H1 (cell line): ENCODE measurements at regions of chr14 and their contacts with region 1.

Region 1: DNA sequence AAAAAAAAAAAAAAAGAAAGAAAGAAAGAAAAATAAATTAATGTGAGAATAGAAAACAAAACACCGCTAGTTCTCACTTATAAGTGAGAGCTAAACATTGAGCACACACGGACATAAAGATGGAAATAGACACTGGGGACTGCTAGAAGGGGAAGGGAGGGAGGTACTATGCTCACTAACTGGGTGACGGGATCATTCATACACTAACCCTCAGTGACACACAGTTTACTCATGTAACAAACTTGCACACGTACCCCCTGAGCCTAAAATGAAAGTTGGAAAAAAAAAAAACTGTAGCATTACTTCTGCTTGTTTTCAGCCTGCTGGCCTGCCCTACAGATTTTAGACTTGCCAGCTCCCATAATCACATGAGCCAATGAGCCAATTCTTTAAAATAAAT is 10.5 kb upstream of the PRMT5 start:
- DNase-seq: no peak
- H3K4me3 ChIP-seq: no peak overlapping the region
- H3K27ac ChIP-seq: no peak overlapping the region
- H3K4me1 ChIP-seq: no peaks in the 10 kb centered on the region
- H3K27me3 ChIP-seq: no peaks in the 10 kb centered on the region
- CTCF ChIP-seq: no peak
- EP300 ChIP-seq: no peak
- POLR2A ChIP-seq: no peak
- RAD21 ChIP-seq: no peak

Region 2: DNA sequence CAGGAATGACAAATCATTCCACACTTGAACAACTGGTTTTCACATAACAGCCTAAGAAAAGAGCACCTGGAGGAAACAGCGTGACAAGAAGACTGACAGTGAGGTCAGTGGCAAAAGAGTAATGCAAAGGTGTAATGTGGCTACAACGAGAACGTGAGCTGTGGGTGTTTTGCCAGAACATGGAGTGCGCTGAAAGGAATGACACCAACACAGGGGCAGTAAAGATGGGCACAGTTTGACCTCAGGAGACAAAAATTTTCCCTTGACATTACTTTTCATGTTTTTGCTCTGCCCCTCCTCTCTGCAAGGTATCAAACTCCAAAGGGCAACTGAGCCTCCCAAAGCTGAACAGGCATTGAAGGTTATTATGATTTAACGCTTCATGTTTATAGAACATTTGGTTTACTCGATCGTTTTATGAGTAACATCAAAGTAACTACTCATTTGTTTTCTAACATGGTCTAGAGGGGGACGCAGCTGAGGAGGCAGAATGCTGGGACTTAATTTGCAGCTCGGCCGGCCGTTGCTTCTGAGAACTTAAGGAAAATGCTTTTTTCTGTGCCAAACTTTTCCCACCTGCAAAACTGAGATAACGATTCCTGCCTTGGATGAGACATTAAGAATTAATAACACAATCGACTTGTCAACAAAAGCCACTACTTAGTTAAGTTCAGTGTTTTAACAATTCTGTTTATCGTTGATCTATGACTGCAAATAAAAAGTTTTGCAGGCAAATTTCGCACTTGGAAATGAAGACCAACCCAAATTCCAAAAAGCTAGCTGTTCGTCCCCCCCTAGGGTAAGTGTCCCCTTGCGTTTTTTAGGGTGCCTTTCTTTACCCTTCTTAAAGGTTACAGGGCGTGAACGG is 16.3 kb after region 1 on chr14:
- CTCF ChIA-PET with region 1: interaction called, 43 read pairs
- POLR2A ChIA-PET with region 1: interaction called, 26 read pairs
- DNase-seq: no peak
- H3K4me3 ChIP-seq: peak overlapping the region; percentile 71 to 88 (median 84)
- H3K27ac ChIP-seq: 0 out of 2 replicates have a peak overlapping the region, but pooled peaks have one; percentile 89
- H3K4me1 ChIP-seq: peaks cover 2 to 4% (median 2%) of the 10 kb centered on the region in 4 experiments; a peak in 5 of 7 replicates
- H3K27me3 ChIP-seq: no peaks in the 10 kb centered on the region
- CTCF ChIP-seq: no peak
- EP300 ChIP-seq: no peak
- POLR2A ChIP-seq: no peak
- RAD21 ChIP-seq: no peak

Region 3: GRCh38 chr14:22966783-22967269 is 27.1 kb after region 1 on chr14:
- CTCF ChIA-PET with region 1: interaction called, 15 read pairs
- POLR2A ChIA-PET with region 1: interaction called, 3 read pairs
- DNase-seq: no peak
- H3K4me3 ChIP-seq: no peak overlapping the region
- H3K27ac ChIP-seq: no peak overlapping the region
- H3K4me1 ChIP-seq: no peaks in the 10 kb centered on the region
- H3K27me3 ChIP-seq: no peaks in the 10 kb centered on the region
- CTCF ChIP-seq: no peak
- EP300 ChIP-seq: no peak
- POLR2A ChIP-seq: no peak; a peak in 1 of 3 replicates
- RAD21 ChIP-seq: no peak

Region 4: DNA sequence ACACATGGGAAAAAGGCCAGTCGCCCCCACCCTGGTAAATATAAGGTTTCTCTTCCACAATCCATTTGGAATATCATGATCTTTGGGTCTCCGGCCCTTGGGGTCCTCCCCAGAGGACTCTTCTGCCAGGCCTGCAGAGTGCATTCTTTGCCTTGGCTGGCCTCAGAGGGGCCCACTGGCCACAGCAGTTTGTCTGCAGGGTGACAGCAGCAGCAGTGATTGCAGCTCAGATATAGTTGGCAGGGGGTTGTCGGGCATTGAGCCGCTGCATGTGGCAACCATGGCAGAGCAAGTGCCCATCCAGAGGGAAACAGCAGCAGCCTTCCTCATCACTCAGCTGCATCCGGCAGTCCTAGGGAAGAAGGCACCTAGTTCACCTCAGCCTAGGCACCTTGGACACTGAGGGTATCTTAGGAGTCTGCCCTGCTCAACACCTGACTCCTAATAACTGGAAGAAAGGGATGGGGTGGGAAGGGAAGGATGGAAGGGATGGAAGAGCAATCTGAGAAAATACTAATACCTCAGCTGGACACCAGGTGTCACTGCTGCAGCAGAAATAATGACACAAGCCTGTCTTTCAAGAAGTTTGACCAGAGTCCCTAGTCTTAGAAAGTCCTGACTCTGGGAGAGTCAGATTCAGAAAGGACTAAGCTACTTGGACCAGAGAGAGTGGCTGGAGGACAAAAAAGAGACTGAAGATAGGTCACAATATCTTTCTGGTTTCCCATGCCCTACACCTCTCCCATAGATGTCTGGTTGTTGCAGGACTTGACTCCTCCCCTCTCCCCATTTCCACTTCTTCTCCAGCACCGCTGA is 33.7 kb after region 1 on chr14:
- CTCF ChIA-PET with region 1: interaction called, 14 read pairs
- POLR2A ChIA-PET with region 1: interaction called, 8 read pairs
- DNase-seq: peak in 1 of 2 experiments; percentile 66
- H3K4me3 ChIP-seq: no peak overlapping the region
- H3K27ac ChIP-seq: no peak overlapping the region
- H3K4me1 ChIP-seq: peaks cover 13 to 20% (median 18%) of the 10 kb centered on the region in 4 experiments
- H3K27me3 ChIP-seq: no peaks in the 10 kb centered on the region
- CTCF ChIP-seq: peak in 2 of 3 experiments; percentile 75 to 76; a peak in 3 of 4 replicates
- EP300 ChIP-seq: no peak
- POLR2A ChIP-seq: no peak; a peak in 1 of 3 replicates
- RAD21 ChIP-seq: peak; percentile 84 to 88